HepG2 (cell line): ENCODE measurements at regions of chr7 and their contacts with region 1.

Region 1: GRCh38 chr7:77331938-77332695 is 84.0 kb downstream of the GSAP start:
- DNase-seq: peak; percentile 76
- ATAC-seq: peak; percentile 97
- H3K4me3 ChIP-seq: no peak overlapping the region
- H3K27ac ChIP-seq: no peak overlapping the region
- H3K4me1 ChIP-seq: peaks cover 15% of the 10 kb centered on the region
- H3K27me3 ChIP-seq: no peaks in the 10 kb centered on the region
- CTCF ChIP-seq: peak; percentile 84
- EP300 ChIP-seq: no peak
- POLR2A ChIP-seq: no peak
- RAD21 ChIP-seq: no peak; the same call in 1 of the 2 replicates

Region 2: DNA sequence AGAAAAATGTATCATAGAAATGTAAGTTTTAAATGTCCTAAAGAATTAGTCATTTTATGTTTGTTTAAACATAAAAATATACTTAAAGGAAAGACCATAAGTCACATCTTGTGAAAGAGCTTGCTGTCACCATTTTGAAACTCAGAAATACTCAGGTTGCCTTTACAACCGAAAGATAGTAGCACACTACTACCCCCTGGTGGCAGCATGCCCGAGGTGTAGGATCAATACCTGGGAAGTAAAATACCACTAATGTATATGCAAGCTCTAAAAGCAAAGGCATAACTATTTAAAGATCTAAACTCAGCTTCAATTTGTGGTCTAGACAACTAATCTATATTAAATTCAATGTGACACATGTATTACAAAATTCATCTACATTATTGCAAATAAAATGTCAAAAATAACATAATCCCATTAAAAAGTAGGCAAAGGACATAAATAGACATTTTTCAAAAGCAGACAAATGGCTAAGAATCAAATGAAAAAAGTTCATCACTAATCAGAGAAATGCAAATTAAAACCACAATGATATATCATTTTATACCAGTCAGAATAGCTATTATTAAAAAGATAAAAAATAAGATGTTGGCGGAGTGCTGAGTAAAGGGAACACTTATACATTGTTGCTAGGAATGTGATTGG is 84.8 kb before region 1 on chr7:
- CTCF ChIA-PET with region 1: no interaction called
- POLR2A ChIA-PET with region 1: no interaction called
- in situ Hi-C with region 1: no loop called
- intact Hi-C with region 1: loop called (anchors 2 kb)
- DNase-seq: peak; percentile 77
- ATAC-seq: peak; percentile 63
- H3K4me3 ChIP-seq: no peak overlapping the region
- H3K27ac ChIP-seq: no peak overlapping the region
- H3K4me1 ChIP-seq: peaks cover 34% of the 10 kb centered on the region
- H3K27me3 ChIP-seq: no peaks in the 10 kb centered on the region
- CTCF ChIP-seq: peak; percentile 83
- EP300 ChIP-seq: no peak
- POLR2A ChIP-seq: no peak
- RAD21 ChIP-seq: peak; percentile 79

Region 3: DNA sequence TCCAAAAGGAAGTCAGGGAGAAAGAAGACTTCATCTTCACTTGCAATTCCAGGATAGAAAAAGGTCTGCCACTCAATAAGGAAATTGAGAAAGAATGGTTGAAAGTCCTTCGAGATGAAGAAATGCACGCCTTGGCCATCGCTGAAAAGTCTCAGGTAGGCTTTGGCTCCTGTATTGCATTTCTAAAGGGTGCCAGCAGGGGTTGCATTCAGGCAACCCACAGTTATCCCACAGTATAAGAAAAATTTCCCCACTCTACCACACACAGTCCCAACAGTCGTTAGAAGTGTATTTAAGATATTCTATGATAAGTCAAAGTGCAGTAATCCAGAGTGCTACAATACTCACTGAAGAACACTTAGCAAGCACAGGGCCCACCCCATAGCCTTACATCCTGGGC is 39.1 kb before region 1 on chr7:
- CTCF ChIA-PET with region 1: no interaction called
- POLR2A ChIA-PET with region 1: no interaction called
- in situ Hi-C with region 1: no loop called
- intact Hi-C with region 1: no loop called
- DNase-seq: no peak
- ATAC-seq: peak; percentile 78
- H3K4me3 ChIP-seq: no peak overlapping the region
- H3K27ac ChIP-seq: no peak overlapping the region
- H3K4me1 ChIP-seq: no peaks in the 10 kb centered on the region
- H3K27me3 ChIP-seq: no peaks in the 10 kb centered on the region
- CTCF ChIP-seq: no peak
- EP300 ChIP-seq: no peak
- POLR2A ChIP-seq: no peak
- RAD21 ChIP-seq: no peak

Region 4: DNA sequence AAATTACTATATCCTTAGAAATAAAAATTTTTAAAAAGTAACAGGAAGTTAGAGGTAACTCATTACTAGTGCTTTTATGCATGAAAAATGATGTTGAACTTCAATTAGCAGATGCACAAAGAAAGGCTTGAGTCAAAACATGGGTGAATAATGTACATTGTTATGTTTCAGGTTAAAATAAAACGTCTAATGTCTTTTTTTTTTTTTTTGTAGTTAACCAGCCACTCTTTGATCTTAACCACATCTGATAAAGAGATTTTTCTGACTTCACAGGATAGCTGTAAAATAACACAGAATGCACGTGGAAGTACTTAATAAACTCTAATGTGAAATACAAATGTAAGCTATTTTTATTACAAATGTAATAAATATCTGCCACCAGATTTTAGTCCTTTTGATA is 22.4 kb after region 1 on chr7:
- CTCF ChIA-PET with region 1: no interaction called
- POLR2A ChIA-PET with region 1: no interaction called
- in situ Hi-C with region 1: no loop called
- intact Hi-C with region 1: loop called (anchors 1 kb)
- DNase-seq: no peak
- ATAC-seq: no peak
- H3K4me3 ChIP-seq: no peak overlapping the region
- H3K27ac ChIP-seq: no peak overlapping the region
- H3K4me1 ChIP-seq: peaks cover 9% of the 10 kb centered on the region
- H3K27me3 ChIP-seq: no peaks in the 10 kb centered on the region
- CTCF ChIP-seq: no peak
- EP300 ChIP-seq: no peak
- POLR2A ChIP-seq: no peak
- RAD21 ChIP-seq: no peak

Region 5: DNA sequence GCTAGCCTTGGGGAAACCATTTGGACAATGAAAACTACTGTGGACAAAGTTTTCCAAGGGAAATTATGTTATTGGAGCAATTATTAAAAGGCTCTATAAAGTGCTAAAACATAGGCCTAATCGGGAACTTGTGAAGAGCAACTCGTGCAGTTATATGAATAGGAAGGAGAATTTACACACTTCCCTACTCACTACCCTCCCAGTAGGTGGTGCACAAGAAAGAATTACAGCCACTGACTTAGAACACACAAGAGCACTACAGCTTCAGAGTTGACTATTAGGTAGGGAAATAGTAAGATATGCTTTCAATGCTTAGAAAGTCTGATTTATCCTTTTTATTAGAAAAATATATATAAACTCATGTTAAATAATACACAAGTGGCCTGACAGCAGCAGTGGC is 36.9 kb after region 1 on chr7:
- CTCF ChIA-PET with region 1: no interaction called
- POLR2A ChIA-PET with region 1: no interaction called
- in situ Hi-C with region 1: no loop called
- intact Hi-C with region 1: no loop called
- DNase-seq: no peak
- ATAC-seq: peak; percentile 64
- H3K4me3 ChIP-seq: no peak overlapping the region
- H3K27ac ChIP-seq: no peak overlapping the region
- H3K4me1 ChIP-seq: no peaks in the 10 kb centered on the region
- H3K27me3 ChIP-seq: no peaks in the 10 kb centered on the region
- CTCF ChIP-seq: peak; percentile 39
- EP300 ChIP-seq: no peak
- POLR2A ChIP-seq: no peak
- RAD21 ChIP-seq: no peak

Region 6: GRCh38 chr7:77393269-77393668 is 61.2 kb after region 1 on chr7:
- CTCF ChIA-PET with region 1: no interaction called
- POLR2A ChIA-PET with region 1: no interaction called
- in situ Hi-C with region 1: no loop called
- intact Hi-C with region 1: no loop called
- DNase-seq: no peak
- ATAC-seq: no peak; the same call in 2 of the 3 replicates
- H3K4me3 ChIP-seq: no peak overlapping the region
- H3K27ac ChIP-seq: no peak overlapping the region
- H3K4me1 ChIP-seq: peaks cover 68% of the 10 kb centered on the region
- H3K27me3 ChIP-seq: no peaks in the 10 kb centered on the region
- CTCF ChIP-seq: no peak
- EP300 ChIP-seq: no peak
- POLR2A ChIP-seq: no peak
- RAD21 ChIP-seq: no peak